ENCODE measurements at regions of chr18 and their contacts with region 1.

Region 1: GRCh38 chr18:48538531-48539405 is at the start of gene CTIF:
- DNase-seq: peak; percentile 95 to 98 (median 97)
- ATAC-seq: peak; percentile 90 to 94 (median 92)
- H3K4me3 ChIP-seq: peak within 1 kb of the TSS; percentile 70 to 93 (median 78)
- H3K27ac ChIP-seq: peak within 1 kb of the TSS; percentile 89 to 98 (median 96)
- H3K4me1 ChIP-seq: peaks cover 0 to 40% (median 22%) of the 10 kb centered on the region in 12 donors
- H3K27me3 ChIP-seq: no peaks in the 10 kb centered on the region
- CTCF ChIP-seq: peak in 2 of 12 donors; percentile 4 to 12
- POLR2A ChIP-seq: peak in 1 of 2 donors; percentile 59
- total RNA-seq, gene CTIF: 21.2 to 82.8 (median 68.0) TPM

Region 2: GRCh38 chr18:48475635-48476549 is 62.9 kb before region 1 on chr18:
- intact Hi-C with region 1: loop called in 6 of 10 experiments (anchors 5 to 10 kb)
- DNase-seq: peak in 3 of 5 donors; percentile 41 to 52 (median 42)
- ATAC-seq: peak; percentile 75 to 93 (median 87)
- H3K4me3 ChIP-seq: no peak overlapping the region
- H3K27ac ChIP-seq: no peak overlapping the region
- H3K4me1 ChIP-seq: peaks cover 0 to 11% (median 3%) of the 10 kb centered on the region in 12 donors
- H3K27me3 ChIP-seq: no peaks in the 10 kb centered on the region
- CTCF ChIP-seq: peak; percentile 69 to 90 (median 84)
- POLR2A ChIP-seq: no peak

Region 3: GRCh38 chr18:48493434-48494230 is 45.1 kb before region 1 on chr18:
- intact Hi-C with region 1: loop called in 4 of 10 experiments (anchors 5 kb)
- DNase-seq: no peak
- ATAC-seq: peak in 1 of 4 donors; percentile 32
- H3K4me3 ChIP-seq: no peak overlapping the region
- H3K27ac ChIP-seq: peak overlapping the region in 2 of 12 donors; percentile 5 to 8
- H3K4me1 ChIP-seq: peaks cover 0 to 26% (median 13%) of the 10 kb centered on the region in 12 donors
- H3K27me3 ChIP-seq: no peaks in the 10 kb centered on the region
- CTCF ChIP-seq: no peak
- POLR2A ChIP-seq: no peak

Region 4: GRCh38 chr18:48590678-48591077 is 51.9 kb after region 1 on chr18:
- intact Hi-C with region 1: loop called in 1 of 10 experiments (anchors 10 kb)
- DNase-seq: peak in 1 of 5 donors; percentile 77
- ATAC-seq: peak in 3 of 4 donors; percentile 5 to 59 (median 29)
- H3K4me3 ChIP-seq: no peak overlapping the region
- H3K27ac ChIP-seq: peak overlapping the region in 10 of 12 donors; percentile 54 to 87 (median 70)
- H3K4me1 ChIP-seq: peaks cover 0 to 54% (median 28%) of the 10 kb centered on the region in 12 donors
- H3K27me3 ChIP-seq: no peaks in the 10 kb centered on the region
- CTCF ChIP-seq: no peak
- POLR2A ChIP-seq: no peak

Region 5: DNA sequence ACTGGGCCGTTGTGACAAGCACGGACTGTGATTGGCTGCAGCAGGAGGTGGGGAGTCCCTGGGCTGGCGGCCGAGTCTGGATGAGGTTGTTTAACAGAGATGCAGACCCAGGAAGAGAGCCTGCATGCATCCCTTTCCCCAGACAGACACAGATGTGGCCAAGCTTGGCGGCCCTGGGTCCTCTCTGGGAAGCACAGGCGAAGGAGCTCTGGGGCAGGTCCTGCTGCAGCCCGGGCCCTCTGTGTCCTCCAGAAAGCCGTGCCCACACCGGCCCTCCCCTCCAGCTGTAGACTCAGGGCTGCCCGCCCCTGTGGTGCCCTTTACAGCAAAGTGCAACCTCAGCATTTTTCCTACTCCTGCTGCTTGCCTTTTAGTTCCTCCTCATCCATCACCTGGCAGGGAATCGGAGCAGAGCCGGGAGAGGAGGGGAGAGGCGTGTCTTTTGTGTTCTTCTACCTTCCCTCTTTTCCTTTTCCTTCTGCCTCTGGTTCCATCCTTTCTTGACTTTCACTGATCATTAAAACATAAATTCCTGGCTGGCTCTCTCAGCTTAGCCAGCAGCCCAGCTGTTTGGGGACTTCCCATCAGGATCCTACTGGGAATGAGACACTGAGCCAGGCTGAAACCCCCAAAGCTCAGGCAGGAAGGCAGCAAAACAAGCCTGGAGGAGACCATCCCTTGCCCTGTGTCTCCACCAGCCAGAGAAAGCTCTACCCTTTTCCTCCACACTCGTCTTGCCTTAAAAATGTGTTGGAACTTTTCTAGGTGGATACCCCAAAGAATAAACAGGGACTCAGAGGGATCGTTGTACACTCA is 75.0 kb after region 1 on chr18:
- intact Hi-C with region 1: loop called in 3 of 10 experiments (anchors 5 kb)
- DNase-seq: peak in 1 of 5 donors; percentile 63
- ATAC-seq: peak in 3 of 4 donors; percentile 23 to 62 (median 39)
- H3K4me3 ChIP-seq: no peak overlapping the region
- H3K27ac ChIP-seq: peak overlapping the region in 6 of 12 donors; percentile 17 to 55 (median 30)
- H3K4me1 ChIP-seq: peaks cover 0 to 76% (median 38%) of the 10 kb centered on the region in 12 donors
- H3K27me3 ChIP-seq: no peaks in the 10 kb centered on the region
- CTCF ChIP-seq: no peak
- POLR2A ChIP-seq: no peak